ENCODE measurements at regions of chr2 and their contacts with region 1.

Region 1: GRCh38 chr2:118882709-118883210 is 35.3 kb upstream of the EN1 start:
- DNase-seq: peak; percentile 76
- ATAC-seq: peak; percentile 80
- H3K4me3 Mint-ChIP-seq: peak overlapping the region; percentile 64
- H3K27ac Mint-ChIP-seq: no peak overlapping the region
- H3K4me1 Mint-ChIP-seq: peaks cover 10% of the 10 kb centered on the region
- H3K27me3 Mint-ChIP-seq: peaks cover 32% of the 10 kb centered on the region
- CTCF ChIP-seq: peak; percentile 78

Region 2: GRCh38 chr2:118632921-118633320 is 249.8 kb before region 1 on chr2:
- CTCF ChIA-PET with region 1: no interaction called
- POLR2A ChIA-PET with region 1: no interaction called
- DNase-seq: no peak
- ATAC-seq: no peak
- H3K4me3 Mint-ChIP-seq: no peak overlapping the region
- H3K27ac Mint-ChIP-seq: no peak overlapping the region
- H3K4me1 Mint-ChIP-seq: peaks cover 27% of the 10 kb centered on the region
- H3K27me3 Mint-ChIP-seq: 0 out of 2 replicates have a peak, but pooled peaks cover 3% of the 10 kb centered on the region
- CTCF ChIP-seq: no peak

Region 3: GRCh38 chr2:118847497-118848172 is 35.1 kb before region 1 on chr2 and contains the start of gene EN1:
- CTCF ChIA-PET with region 1: no interaction called
- POLR2A ChIA-PET with region 1: no interaction called
- DNase-seq: peak; percentile 83
- ATAC-seq: peak; percentile 38
- H3K4me3 Mint-ChIP-seq: peak within 1 kb of the TSS; percentile 62
- H3K27ac Mint-ChIP-seq: no peak within 1 kb of the TSS
- H3K4me1 Mint-ChIP-seq: peaks cover 72% of the 10 kb centered on the region
- H3K27me3 Mint-ChIP-seq: peaks cover 97% of the 10 kb centered on the region
- CTCF ChIP-seq: no peak
- total RNA-seq, gene EN1: not detected in 3 replicates

Region 4: GRCh38 chr2:118940486-118941205 is 57.9 kb after region 1 on chr2:
- CTCF ChIA-PET with region 1: interaction called, 16 read pairs
- POLR2A ChIA-PET with region 1: no interaction called
- DNase-seq: no peak
- ATAC-seq: no peak
- H3K4me3 Mint-ChIP-seq: no peak overlapping the region
- H3K27ac Mint-ChIP-seq: no peak overlapping the region
- H3K4me1 Mint-ChIP-seq: no peaks in the 10 kb centered on the region
- H3K27me3 Mint-ChIP-seq: no peaks in the 10 kb centered on the region; the same call in 1 of the 2 replicates
- CTCF ChIP-seq: no peak

Region 5: DNA sequence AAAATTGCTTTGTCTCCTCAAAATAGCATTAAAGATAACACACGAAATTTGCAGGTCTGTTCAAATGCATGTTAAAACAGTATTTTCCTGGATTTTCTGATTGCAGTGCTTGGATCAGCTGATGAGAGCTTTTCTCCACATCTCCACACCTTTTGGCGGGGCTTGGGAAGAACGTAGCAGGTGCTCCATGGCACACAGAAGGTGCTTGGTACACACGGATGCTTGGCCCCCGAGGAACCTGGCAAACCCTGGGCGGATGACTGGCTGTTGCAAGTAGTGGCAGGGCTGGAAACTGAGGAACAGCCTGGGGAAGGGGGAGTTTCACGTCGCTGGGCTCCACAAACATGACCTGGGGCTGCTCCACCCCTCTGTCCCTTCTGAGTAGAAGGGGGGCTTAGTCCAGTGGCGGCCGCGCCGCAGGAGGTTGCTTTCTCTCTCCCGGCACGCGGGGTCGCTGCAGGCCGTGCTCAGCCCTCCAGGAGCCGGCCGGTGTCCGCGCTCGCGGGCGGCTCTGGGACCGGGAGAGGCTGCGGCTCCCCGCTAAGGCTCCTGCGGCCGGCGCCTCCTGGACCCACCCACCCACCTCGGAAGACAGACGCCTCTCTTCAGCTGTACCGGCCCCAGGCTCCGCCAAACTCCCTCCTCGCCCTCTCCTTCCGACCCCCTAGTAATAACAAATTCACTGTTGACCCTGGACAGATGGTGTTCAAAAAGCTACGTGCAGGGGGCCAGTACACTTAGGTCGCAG is 128.6 kb after region 1 on chr2:
- CTCF ChIA-PET with region 1: interaction called, 18 read pairs
- POLR2A ChIA-PET with region 1: no interaction called
- DNase-seq: peak; percentile 82
- ATAC-seq: peak; percentile 91
- H3K4me3 Mint-ChIP-seq: peak overlapping the region; percentile 48
- H3K27ac Mint-ChIP-seq: no peak overlapping the region
- H3K4me1 Mint-ChIP-seq: peaks cover 9% of the 10 kb centered on the region
- H3K27me3 Mint-ChIP-seq: peaks cover 16% of the 10 kb centered on the region
- CTCF ChIP-seq: peak; percentile 24; the same call in 1 of the 2 replicates

Region 6: DNA sequence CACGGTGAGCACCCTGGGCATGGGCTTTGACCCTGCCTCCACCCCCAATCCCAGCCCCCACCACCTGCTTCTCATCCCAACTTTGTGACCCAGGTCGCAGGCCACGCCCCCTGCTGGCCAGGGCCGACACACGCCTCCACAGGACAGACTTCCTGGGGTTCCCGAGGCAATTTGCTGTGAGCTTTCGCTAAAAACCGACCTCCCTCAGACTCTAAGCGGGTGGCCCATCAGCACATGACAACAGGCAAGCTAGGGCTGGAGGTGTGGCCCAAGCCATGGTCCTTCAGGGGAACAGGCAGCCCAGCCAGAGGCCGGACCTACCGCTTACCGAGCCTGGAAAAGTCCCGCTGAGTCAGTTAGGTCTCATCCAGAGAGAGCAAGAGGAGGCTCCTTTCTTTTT is 243.9 kb after region 1 on chr2:
- CTCF ChIA-PET with region 1: interaction called, 11 read pairs
- POLR2A ChIA-PET with region 1: no interaction called
- DNase-seq: peak; percentile 85
- ATAC-seq: peak; percentile 92
- H3K4me3 Mint-ChIP-seq: peak overlapping the region; percentile 54
- H3K27ac Mint-ChIP-seq: no peak overlapping the region
- H3K4me1 Mint-ChIP-seq: peaks cover 46% of the 10 kb centered on the region
- H3K27me3 Mint-ChIP-seq: peaks cover 30% of the 10 kb centered on the region
- CTCF ChIP-seq: peak; percentile 78; the same call in 1 of the 2 replicates

Region 7: GRCh38 chr2:119196301-119197125 is 313.8 kb after region 1 on chr2:
- CTCF ChIA-PET with region 1: interaction called, 13 read pairs
- POLR2A ChIA-PET with region 1: no interaction called
- DNase-seq: no peak
- ATAC-seq: peak; percentile 82
- H3K4me3 Mint-ChIP-seq: peak overlapping the region; percentile 43
- H3K27ac Mint-ChIP-seq: no peak overlapping the region
- H3K4me1 Mint-ChIP-seq: peaks cover 47% of the 10 kb centered on the region
- H3K27me3 Mint-ChIP-seq: peaks cover 30% of the 10 kb centered on the region
- CTCF ChIP-seq: no peak

Region 8: DNA sequence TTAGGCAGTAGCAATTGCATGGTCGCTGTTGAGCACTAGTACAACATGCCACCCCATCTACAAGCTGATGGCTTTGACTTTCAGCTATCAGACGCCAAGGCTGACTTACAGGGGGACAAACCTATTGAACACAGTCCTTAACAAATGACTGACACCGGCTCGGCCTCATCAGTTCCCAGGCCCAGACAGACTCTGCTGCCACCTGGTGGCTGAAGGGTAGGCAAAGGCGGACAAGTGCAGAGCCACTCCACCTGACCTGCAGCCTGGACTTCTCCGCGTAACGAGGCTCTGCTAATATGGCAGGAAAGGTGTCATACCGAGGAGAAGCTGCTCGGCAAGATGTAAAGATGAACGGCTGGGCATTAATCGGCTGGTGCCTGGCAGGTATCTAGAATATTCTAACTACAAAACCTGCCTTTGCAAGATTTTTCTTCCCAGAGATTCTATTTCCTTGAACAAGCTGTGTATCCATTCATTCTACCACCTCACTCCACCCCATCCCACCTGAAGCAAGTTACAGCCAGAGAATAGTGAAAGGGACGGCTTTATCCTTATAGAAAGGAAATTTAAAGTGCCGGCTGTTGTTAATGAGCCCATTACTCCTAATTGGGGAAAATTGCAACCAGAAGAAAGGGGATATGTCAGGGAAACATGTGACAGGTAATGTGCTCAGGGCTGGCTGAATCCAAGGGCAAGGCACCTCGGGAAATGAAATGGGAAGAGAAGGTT is 408.3 kb after region 1 on chr2:
- CTCF ChIA-PET with region 1: interaction called, 10 read pairs
- POLR2A ChIA-PET with region 1: no interaction called
- DNase-seq: peak; percentile 90
- ATAC-seq: peak; percentile 99
- H3K4me3 Mint-ChIP-seq: no peak overlapping the region
- H3K27ac Mint-ChIP-seq: no peak overlapping the region
- H3K4me1 Mint-ChIP-seq: peaks cover 13% of the 10 kb centered on the region
- H3K27me3 Mint-ChIP-seq: no peaks in the 10 kb centered on the region
- CTCF ChIP-seq: peak; percentile 73